Posterior cingulate gyrus (tissue), 11 donors: ENCODE measurements at regions of chr6 and their contacts with region 1.

Region 1: GRCh38 chr6:137341681-137342195 is 122.6 kb upstream of the IFNGR1 start:
- DNase-seq: peak; percentile 36 to 94 (median 66)

Region 2: DNA sequence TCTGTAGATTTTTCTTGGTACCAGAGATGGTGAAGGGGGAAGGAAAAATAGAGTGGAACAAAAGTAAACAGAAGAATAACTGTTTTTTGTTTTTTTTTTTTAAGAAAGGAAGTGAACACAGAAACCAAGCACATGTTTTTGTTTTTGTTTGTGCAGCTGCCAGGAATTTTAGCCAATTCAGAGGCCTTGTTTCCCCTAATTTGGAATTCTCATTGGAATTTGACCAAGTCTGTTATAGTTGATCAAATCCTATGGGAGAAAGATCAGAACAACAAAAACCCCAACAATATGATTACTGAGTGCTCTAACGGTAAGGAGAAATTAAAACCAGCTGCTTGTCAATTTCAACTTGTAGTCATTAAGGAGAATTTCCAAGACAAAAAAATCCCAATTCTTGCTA is 150.1 kb before region 1 on chr6:
- intact Hi-C with region 1: no loop called
- DNase-seq: no peak

Region 3: DNA sequence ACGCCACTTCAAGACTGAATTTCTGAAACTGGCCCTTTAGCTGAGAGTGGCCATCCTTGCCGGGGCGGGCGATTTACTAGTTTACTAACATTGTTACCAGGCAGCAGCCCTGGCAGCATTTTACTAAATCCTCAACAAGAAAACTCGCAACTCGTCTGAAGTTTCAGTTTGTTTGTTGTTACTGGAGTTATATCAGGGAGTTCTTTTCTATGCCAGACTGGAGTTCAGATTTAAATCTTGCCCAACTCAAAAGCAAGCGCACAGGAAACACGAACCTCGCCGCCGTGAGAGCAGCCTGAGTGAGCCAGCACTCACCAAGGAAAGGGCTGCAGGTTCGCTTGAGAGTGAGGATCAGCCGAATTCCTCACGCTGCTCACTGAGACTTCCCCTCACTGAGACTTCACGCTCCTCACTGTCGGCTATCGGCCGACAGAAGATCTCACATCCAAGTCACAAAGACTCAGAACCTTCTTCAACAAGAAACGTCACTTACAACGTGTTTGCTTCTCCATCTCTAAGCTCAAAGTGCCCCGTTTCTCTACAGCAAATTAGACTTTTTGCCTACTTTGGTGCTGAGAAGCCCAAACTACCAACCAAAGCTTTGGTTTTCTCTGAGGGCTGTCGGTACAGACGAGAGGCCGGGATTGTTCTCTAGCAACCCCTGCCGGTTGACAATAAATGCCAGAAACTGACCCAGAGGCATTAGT is 73.5 kb after region 1 on chr6:
- intact Hi-C with region 1: loop called (anchors 2 kb)
- DNase-seq: peak in 8 of 10 donors; percentile 22 to 83 (median 68)

Region 4: DNA sequence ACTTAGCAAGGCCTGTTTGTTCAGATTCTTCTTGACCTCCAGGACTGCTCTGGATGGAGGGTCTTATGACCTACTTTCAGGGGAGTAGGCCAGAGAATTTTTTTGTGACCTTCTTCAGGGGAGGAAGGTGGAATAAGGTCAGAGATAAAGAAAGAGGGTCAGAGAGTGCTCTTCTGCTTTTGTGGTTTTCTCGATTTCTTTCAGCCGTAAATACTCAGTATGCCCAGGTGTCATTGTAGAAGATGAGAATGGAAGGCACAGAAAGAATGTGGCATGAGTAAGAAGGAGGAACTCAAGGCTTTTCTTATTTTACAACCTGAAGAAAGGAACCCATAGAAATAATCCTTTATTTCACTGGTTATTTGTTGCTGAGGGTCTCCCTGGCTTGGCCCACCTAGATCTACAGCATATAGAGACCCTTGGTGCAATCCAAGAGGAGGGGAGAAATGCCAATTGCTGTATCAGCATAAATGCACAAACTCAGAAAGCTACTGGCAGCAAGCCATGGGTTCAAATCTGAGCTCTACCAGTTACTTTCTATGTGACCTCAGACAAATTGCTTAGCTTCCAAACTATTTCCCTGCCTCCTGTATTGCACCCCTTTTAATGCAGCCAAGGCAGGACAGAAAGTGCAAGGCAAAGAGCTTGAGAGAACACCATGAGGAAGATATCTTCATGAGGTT is 84.4 kb after region 1 on chr6:
- intact Hi-C with region 1: no loop called
- DNase-seq: no peak